ENCODE measurements at regions of chrX and their contacts with region 1.

Region 1: DNA sequence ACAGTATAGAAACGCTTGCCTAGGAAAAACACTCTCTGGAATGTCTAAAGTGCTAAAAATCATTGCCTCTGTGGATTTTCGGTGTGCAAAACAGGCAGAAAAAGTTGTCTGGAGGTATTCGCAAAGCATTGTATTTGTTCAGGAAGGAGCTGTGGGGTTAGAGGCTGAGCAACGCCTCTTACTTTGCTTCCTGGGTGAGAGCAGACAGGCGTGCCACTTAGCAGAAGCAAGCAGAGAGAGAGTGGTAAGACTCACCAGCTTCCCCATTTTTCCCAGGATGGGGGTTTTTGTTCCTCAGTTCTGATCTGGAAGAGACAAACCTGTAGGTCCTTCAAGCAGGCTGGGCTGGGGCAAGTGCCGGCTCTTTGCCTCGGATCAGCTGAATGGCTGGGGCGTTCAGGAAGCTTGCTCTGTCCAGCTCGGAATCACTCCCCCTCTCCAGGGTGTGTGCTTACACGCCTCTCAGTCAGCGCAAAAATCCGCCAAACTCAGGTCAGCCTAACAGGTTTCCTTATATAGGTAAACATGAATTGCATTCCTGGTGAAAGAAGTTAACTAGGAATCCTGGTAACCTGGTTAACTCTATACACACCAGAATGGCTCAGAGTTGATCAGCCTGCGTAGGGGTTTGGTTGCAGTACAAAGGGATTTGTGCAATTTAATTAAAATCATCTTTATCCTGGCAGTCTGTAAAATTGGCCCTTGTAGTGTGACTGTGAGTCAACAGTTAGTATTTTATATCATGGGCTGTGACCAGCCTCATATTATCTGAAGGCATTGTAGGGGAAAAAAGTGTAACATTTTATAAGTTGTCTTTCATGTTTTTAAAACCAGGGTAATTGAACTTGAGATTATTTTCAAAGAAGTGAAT is 213.1 kb upstream of the MID1 start:
- DNase-seq: peak; percentile 82 to 88
- H3K4me3 ChIP-seq: peak overlapping the region; percentile 61
- H3K4me3 Mint-ChIP-seq: peak overlapping the region; percentile 85
- H3K27ac Mint-ChIP-seq: peak overlapping the region; percentile 59
- H3K4me1 ChIP-seq: peaks cover 13% of the 10 kb centered on the region
- H3K4me1 Mint-ChIP-seq: no peaks in the 10 kb centered on the region
- H3K27me3 ChIP-seq: no peaks in the 10 kb centered on the region
- H3K27me3 Mint-ChIP-seq: no peaks in the 10 kb centered on the region
- CTCF ChIP-seq: no peak

Region 2: GRCh38 chrX:10755439-10756334 is 77.8 kb before region 1 on chrX:
- CTCF ChIA-PET with region 1: no interaction called
- POLR2A ChIA-PET with region 1: no interaction called
- intact Hi-C with region 1: loop called (anchors 10 kb)
- DNase-seq: peak; percentile 45 to 67
- H3K4me3 ChIP-seq: no peak overlapping the region
- H3K4me3 Mint-ChIP-seq: peak overlapping the region; percentile 63
- H3K27ac Mint-ChIP-seq: peak overlapping the region; percentile 67
- H3K4me1 ChIP-seq: peaks cover 24% of the 10 kb centered on the region
- H3K4me1 Mint-ChIP-seq: peaks cover 7% of the 10 kb centered on the region
- H3K27me3 ChIP-seq: no peaks in the 10 kb centered on the region
- H3K27me3 Mint-ChIP-seq: no peaks in the 10 kb centered on the region
- CTCF ChIP-seq: no peak

Region 3: DNA sequence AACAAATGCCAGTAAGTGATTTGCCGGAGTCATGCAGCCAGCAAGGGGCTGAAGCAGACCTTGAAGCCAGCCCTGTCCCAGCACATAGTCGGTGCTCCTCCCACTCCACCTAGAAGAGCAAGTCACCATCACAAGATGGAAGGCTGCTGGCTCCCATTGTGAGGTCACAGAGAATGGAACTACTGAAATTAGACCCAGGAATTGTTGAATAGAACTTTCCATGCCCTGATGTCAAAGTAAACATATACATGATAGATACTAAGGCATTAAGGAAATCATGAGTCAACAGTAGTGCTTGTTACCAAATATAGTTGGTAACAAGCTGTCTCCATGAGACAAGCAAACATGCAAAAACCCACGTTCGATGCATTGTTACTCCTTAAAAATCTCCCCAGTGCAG is 36.1 kb before region 1 on chrX:
- CTCF ChIA-PET with region 1: no interaction called
- POLR2A ChIA-PET with region 1: no interaction called
- intact Hi-C with region 1: loop called (anchors 5 kb)
- DNase-seq: no peak
- H3K4me3 ChIP-seq: no peak overlapping the region
- H3K4me3 Mint-ChIP-seq: no peak overlapping the region
- H3K27ac Mint-ChIP-seq: no peak overlapping the region
- H3K4me1 ChIP-seq: peaks cover 4% of the 10 kb centered on the region; the same call in 1 of the 2 replicates
- H3K4me1 Mint-ChIP-seq: peaks cover 13% of the 10 kb centered on the region
- H3K27me3 ChIP-seq: no peaks in the 10 kb centered on the region
- H3K27me3 Mint-ChIP-seq: no peaks in the 10 kb centered on the region
- CTCF ChIP-seq: no peak

Region 4: DNA sequence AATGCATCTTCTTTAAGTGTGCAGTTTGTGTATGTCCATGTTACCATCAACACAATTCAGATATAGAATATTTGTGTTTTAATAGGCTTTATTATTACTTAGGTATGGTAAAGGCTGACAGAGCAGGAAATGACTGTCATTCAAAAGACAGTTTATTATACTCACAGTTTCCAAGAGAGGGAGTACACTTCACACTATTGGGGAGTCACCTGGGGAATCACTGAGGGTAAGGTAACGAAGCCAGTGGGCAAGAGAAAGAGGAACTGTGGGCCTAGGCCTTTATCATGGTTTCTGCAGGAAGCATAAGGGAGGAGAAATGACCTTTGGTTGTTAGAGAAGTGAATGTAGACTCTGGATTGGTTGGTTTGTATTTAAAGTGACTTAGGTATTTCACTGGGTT is 42.5 kb after region 1 on chrX:
- CTCF ChIA-PET with region 1: no interaction called
- POLR2A ChIA-PET with region 1: no interaction called
- intact Hi-C with region 1: no loop called
- DNase-seq: peak in 1 of 2 experiments; percentile 0
- H3K4me3 ChIP-seq: no peak overlapping the region
- H3K4me3 Mint-ChIP-seq: no peak overlapping the region
- H3K27ac Mint-ChIP-seq: no peak overlapping the region
- H3K4me1 ChIP-seq: no peaks in the 10 kb centered on the region
- H3K4me1 Mint-ChIP-seq: peaks cover 6% of the 10 kb centered on the region
- H3K27me3 ChIP-seq: no peaks in the 10 kb centered on the region
- H3K27me3 Mint-ChIP-seq: no peaks in the 10 kb centered on the region
- CTCF ChIP-seq: no peak

Region 5: GRCh38 chrX:11040405-11040804 is 206.9 kb after region 1 on chrX:
- CTCF ChIA-PET with region 1: no interaction called
- POLR2A ChIA-PET with region 1: no interaction called
- intact Hi-C with region 1: loop called (anchors 5 kb)
- DNase-seq: no peak
- H3K4me3 ChIP-seq: no peak overlapping the region
- H3K4me3 Mint-ChIP-seq: no peak overlapping the region
- H3K27ac Mint-ChIP-seq: peak overlapping the region; percentile 35
- H3K4me1 ChIP-seq: no peaks in the 10 kb centered on the region; the same call in 1 of the 2 replicates
- H3K4me1 Mint-ChIP-seq: no peaks in the 10 kb centered on the region
- H3K27me3 ChIP-seq: no peaks in the 10 kb centered on the region
- H3K27me3 Mint-ChIP-seq: no peaks in the 10 kb centered on the region
- CTCF ChIP-seq: peak in 1 of 2 experiments; percentile 44

Measured in Caco-2 (cell line).